ENCODE measurements at regions of chr1 and their contacts with region 1.

Region 1: GRCh38 chr1:235011599-235012435 is 116.8 kb downstream of the TOMM20 start:
- DNase-seq: peak; percentile 93 to 99 (median 97)
- H3K4me3 ChIP-seq: peak overlapping the region in 1 of 2 donors; percentile 61
- H3K4me3 Mint-ChIP-seq: peak overlapping the region; percentile 75 to 90 (median 82)
- H3K27ac ChIP-seq: peak overlapping the region; percentile 91
- H3K27ac Mint-ChIP-seq: peak overlapping the region; percentile 93 to 99 (median 99)
- H3K4me1 ChIP-seq: peaks cover 45% of the 10 kb centered on the region
- H3K4me1 Mint-ChIP-seq: peaks cover 43 to 73% (median 58%) of the 10 kb centered on the region in 4 donors
- H3K27me3 ChIP-seq: no peaks in the 10 kb centered on the region
- H3K27me3 Mint-ChIP-seq: no peaks in the 10 kb centered on the region

Region 2: DNA sequence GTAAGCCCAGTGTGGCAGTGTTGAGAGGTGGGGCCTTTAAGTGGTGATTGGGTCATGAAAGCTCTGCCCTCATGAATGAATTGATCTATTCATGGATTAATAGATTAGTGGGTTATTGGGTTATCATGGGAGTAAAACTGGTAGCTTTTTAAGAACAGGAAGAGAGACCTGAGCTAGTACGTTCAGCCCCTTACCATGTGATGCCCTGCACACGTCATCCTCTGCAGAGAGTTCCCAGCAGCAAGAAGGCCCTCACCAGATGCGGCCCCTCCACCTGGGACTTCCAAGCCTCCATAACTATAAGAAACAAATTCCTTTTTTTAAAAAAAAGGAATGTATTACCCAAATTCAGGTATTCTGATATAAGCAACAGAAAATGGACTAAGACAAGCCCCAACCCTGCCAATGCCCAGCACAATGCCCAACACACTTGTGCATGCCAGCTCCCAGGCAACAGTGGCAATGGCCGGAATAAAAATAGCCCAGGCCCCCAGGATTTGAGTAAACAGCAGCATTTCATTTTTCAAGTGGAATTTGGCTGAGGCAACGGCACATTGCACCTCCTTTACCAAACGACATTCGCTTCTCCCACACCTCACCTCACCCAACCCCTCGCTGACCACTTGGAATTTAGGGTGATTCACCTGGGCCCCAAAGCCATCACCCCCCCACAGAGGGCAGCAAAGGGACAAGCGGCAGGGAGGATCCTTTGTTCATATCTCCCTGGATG is 99.1 kb before region 1 on chr1:
- CTCF ChIA-PET with region 1: no interaction called
- POLR2A ChIA-PET with region 1: interaction called, 14 read pairs
- intact Hi-C with region 1: no loop called
- DNase-seq: peak in 2 of 5 donors; percentile 11 to 16
- H3K4me3 ChIP-seq: no peak overlapping the region
- H3K4me3 Mint-ChIP-seq: peak overlapping the region in 4 of 8 donors; percentile 17 to 73 (median 52)
- H3K27ac ChIP-seq: no peak overlapping the region
- H3K27ac Mint-ChIP-seq: peak overlapping the region; percentile 68 to 95 (median 93)
- H3K4me1 ChIP-seq: peaks cover 29% of the 10 kb centered on the region
- H3K4me1 Mint-ChIP-seq: peaks cover 24 to 48% (median 33%) of the 10 kb centered on the region in 4 donors
- H3K27me3 ChIP-seq: no peaks in the 10 kb centered on the region
- H3K27me3 Mint-ChIP-seq: no peaks in the 10 kb centered on the region

Region 3: DNA sequence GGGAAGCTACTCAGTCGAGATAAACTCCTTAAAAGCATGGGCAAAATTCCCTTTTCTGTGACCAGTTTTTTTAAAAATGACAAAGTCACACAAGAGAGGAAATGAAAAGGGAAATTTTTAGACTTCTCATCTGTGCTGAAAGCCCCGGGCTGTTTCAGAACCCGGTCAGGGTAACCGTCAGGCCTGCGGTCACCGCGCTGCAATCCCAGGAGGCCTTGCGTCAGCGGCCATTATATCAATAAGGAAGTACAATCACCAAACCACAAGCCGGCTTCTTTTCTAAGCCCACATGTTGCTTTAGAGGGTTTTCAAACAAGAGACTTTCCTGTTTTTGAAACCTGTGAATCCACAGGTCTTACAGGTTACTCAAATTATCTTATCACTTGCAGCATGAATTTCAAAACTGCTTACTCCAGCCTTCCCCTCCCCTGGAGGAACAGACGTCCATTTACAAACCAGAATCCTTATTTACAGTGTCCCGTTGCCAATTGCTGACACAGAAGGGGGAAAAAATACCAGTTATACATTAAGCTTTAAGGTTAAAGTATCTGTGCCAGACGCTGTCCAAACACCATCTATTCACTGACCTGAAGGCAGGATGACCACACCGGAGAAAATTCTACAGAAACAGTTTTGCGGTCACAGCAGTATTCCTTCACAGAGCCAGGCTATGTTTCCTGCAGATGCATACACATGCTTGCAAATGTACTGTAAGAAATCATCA is 48.5 kb before region 1 on chr1:
- CTCF ChIA-PET with region 1: no interaction called
- POLR2A ChIA-PET with region 1: interaction called, 25 read pairs
- intact Hi-C with region 1: loop called (anchors 1 kb)
- DNase-seq: peak; percentile 85 to 94 (median 86)
- H3K4me3 ChIP-seq: peak overlapping the region; percentile 14 to 46
- H3K4me3 Mint-ChIP-seq: peak overlapping the region; percentile 41 to 89 (median 84)
- H3K27ac ChIP-seq: peak overlapping the region; percentile 89
- H3K27ac Mint-ChIP-seq: peak overlapping the region; percentile 90 to 98 (median 96)
- H3K4me1 ChIP-seq: peaks cover 72% of the 10 kb centered on the region
- H3K4me1 Mint-ChIP-seq: peaks cover 58 to 76% (median 64%) of the 10 kb centered on the region in 4 donors
- H3K27me3 ChIP-seq: no peaks in the 10 kb centered on the region
- H3K27me3 Mint-ChIP-seq: no peaks in the 10 kb centered on the region

Region 4: GRCh38 chr1:234987415-234988154 is 24.2 kb before region 1 on chr1:
- CTCF ChIA-PET with region 1: interaction called, 3 read pairs
- POLR2A ChIA-PET with region 1: interaction called, 11 read pairs
- intact Hi-C with region 1: no loop called
- DNase-seq: no peak
- H3K4me3 ChIP-seq: peak overlapping the region in 1 of 2 donors; percentile 4
- H3K4me3 Mint-ChIP-seq: peak overlapping the region in 6 of 8 donors; percentile 26 to 59 (median 43)
- H3K27ac ChIP-seq: peak overlapping the region; percentile 12
- H3K27ac Mint-ChIP-seq: peak overlapping the region; percentile 26 to 89 (median 72)
- H3K4me1 ChIP-seq: peaks cover 55% of the 10 kb centered on the region
- H3K4me1 Mint-ChIP-seq: peaks cover 33 to 62% (median 50%) of the 10 kb centered on the region in 4 donors
- H3K27me3 ChIP-seq: no peaks in the 10 kb centered on the region
- H3K27me3 Mint-ChIP-seq: no peaks in the 10 kb centered on the region